ENCODE measurements at regions of chr9 and their contacts with region 1.

Region 1: GRCh38 chr9:33893861-33894260 is 76.9 kb downstream of the UBE2R2 start:
- DNase-seq: peak; percentile 27
- ATAC-seq: 0 out of 2 replicates have a peak, but pooled peaks have one; percentile 29
- H3K4me3 ChIP-seq: no peak overlapping the region
- H3K27ac ChIP-seq: no peak overlapping the region
- H3K4me1 ChIP-seq: no peaks in the 10 kb centered on the region
- H3K27me3 ChIP-seq: no peaks in the 10 kb centered on the region
- CTCF ChIP-seq: no peak
- POLR2A ChIP-seq: no peak
- RAD21 ChIP-seq: no peak

Region 2: GRCh38 chr9:32811246-32811645 is 1082.6 kb before region 1 on chr9:
- CTCF ChIA-PET with region 1: no interaction called
- POLR2A ChIA-PET with region 1: no interaction called
- dilution Hi-C with region 1: no loop called
- in situ Hi-C with region 1: no loop called
- intact Hi-C with region 1: no loop called
- DNase-seq: no peak
- ATAC-seq: no peak
- H3K4me3 ChIP-seq: no peak overlapping the region
- H3K27ac ChIP-seq: no peak overlapping the region
- H3K4me1 ChIP-seq: no peaks in the 10 kb centered on the region
- H3K27me3 ChIP-seq: no peaks in the 10 kb centered on the region
- CTCF ChIP-seq: no peak
- POLR2A ChIP-seq: no peak
- RAD21 ChIP-seq: no peak

Region 3: GRCh38 chr9:33878691-33879366 is 15.0 kb before region 1 on chr9:
- CTCF ChIA-PET with region 1: no interaction called
- POLR2A ChIA-PET with region 1: interaction called, 11 read pairs
- dilution Hi-C with region 1: no loop called
- in situ Hi-C with region 1: no loop called
- intact Hi-C with region 1: no loop called
- DNase-seq: no peak
- ATAC-seq: no peak
- H3K4me3 ChIP-seq: no peak overlapping the region
- H3K27ac ChIP-seq: no peak overlapping the region
- H3K4me1 ChIP-seq: peaks cover 7% of the 10 kb centered on the region
- H3K27me3 ChIP-seq: no peaks in the 10 kb centered on the region
- CTCF ChIP-seq: no peak
- POLR2A ChIP-seq: no peak
- RAD21 ChIP-seq: no peak